CD4-positive, alpha-beta memory T cell (primary cell): ENCODE measurements at regions of chrX and their contacts with region 1.

Region 1: DNA sequence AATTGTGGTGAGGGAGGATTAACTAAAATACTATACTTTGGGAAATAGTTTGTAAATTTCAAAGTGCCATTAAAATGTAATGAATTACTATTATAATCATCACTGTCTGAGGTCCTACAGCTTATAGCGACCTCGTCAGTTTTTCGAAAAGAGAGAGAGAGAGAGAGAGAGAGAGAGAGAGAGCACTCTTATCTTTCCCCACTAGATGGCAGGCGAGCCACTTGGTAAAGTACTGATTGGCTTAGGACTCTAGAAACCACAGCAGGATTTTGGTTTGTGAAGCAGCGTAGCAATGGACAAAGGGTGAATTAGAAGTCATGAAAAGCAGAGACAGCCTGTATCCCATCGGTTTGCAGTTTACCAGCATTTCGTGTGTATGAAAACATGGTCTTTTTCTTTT is 52.5 kb downstream of the LINC00632 start:
- DNase-seq: peak; percentile 17 to 47 (median 41)
- H3K4me3 ChIP-seq: no peak overlapping the region
- H3K4me3 Mint-ChIP-seq: peak overlapping the region in 1 of 8 donors; percentile 13
- H3K27ac ChIP-seq: no peak overlapping the region
- H3K27ac Mint-ChIP-seq: peak overlapping the region in 2 of 7 donors; percentile 76 to 77
- H3K4me1 ChIP-seq: peaks cover 4% of the 10 kb centered on the region
- H3K4me1 Mint-ChIP-seq: peaks cover 7 to 20% (median 12%) of the 10 kb centered on the region in 4 donors
- H3K27me3 ChIP-seq: no peaks in the 10 kb centered on the region
- H3K27me3 Mint-ChIP-seq: peaks cover 6 to 9% of the 10 kb centered on the region in 2 donors

Region 2: DNA sequence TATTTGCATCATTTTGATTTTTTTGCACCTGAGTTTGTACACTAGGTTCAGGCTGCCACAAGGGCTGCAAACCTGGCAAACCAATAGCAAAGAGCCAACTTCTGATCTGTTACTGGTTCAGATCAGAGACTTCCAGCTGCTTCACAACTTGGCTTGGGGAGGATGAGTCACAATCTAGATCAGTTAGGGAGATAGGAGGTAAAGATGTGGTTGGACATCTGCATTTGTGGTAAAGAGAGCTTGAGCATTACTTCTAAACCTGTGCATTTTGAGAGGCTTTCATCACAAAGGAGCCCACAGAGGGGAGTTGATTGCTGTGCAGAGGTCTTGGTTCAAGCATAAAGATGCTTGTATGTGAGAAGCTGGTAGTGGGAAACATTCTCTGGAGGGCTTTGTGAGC is 18.0 kb before region 1 on chrX:
- CTCF ChIA-PET with region 1: interaction called, 9 read pairs
- POLR2A ChIA-PET with region 1: no interaction called
- intact Hi-C with region 1: loop called (anchors 2 kb)
- DNase-seq: peak; percentile 21 to 37 (median 36)
- H3K4me3 ChIP-seq: no peak overlapping the region
- H3K4me3 Mint-ChIP-seq: peak overlapping the region in 2 of 8 donors; percentile 2 to 48
- H3K27ac ChIP-seq: no peak overlapping the region
- H3K27ac Mint-ChIP-seq: peak overlapping the region in 2 of 7 donors; percentile 8 to 14
- H3K4me1 ChIP-seq: peaks cover 4% of the 10 kb centered on the region
- H3K4me1 Mint-ChIP-seq: peaks cover 8 to 11% (median 9%) of the 10 kb centered on the region in 4 donors
- H3K27me3 ChIP-seq: no peaks in the 10 kb centered on the region
- H3K27me3 Mint-ChIP-seq: no peaks in the 10 kb centered on the region

Region 3: GRCh38 chrX:140836874-140837273 is 74.8 kb after region 1 on chrX:
- CTCF ChIA-PET with region 1: no interaction called
- POLR2A ChIA-PET with region 1: no interaction called
- intact Hi-C with region 1: no loop called
- DNase-seq: no peak
- H3K4me3 ChIP-seq: no peak overlapping the region
- H3K4me3 Mint-ChIP-seq: no peak overlapping the region
- H3K27ac ChIP-seq: no peak overlapping the region
- H3K27ac Mint-ChIP-seq: no peak overlapping the region
- H3K4me1 ChIP-seq: no peaks in the 10 kb centered on the region
- H3K4me1 Mint-ChIP-seq: peaks cover 0 to 1% (median 0%) of the 10 kb centered on the region in 4 donors
- H3K27me3 ChIP-seq: no peaks in the 10 kb centered on the region
- H3K27me3 Mint-ChIP-seq: no peaks in the 10 kb centered on the region

Region 4: DNA sequence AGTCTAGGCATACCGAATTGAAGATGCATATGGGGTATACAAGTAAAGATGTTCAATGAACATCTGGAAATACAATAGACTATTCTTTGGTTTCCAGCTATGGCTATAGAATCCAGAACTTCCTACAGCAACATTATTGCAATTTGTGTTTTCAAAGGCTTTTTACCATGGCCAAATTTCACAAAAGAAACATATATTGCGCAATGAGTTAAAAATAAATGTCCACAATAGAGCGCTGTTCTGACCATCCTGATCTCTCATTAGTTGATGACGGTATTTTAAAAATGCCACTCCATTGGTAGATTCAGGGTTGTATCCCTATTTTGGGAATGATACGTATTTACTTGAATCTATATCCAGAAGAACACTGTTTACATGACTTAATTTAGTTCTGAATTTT is 86.7 kb after region 1 on chrX:
- CTCF ChIA-PET with region 1: no interaction called
- POLR2A ChIA-PET with region 1: no interaction called
- intact Hi-C with region 1: no loop called
- DNase-seq: no peak
- H3K4me3 ChIP-seq: no peak overlapping the region
- H3K4me3 Mint-ChIP-seq: no peak overlapping the region
- H3K27ac ChIP-seq: no peak overlapping the region
- H3K27ac Mint-ChIP-seq: no peak overlapping the region
- H3K4me1 ChIP-seq: no peaks in the 10 kb centered on the region
- H3K4me1 Mint-ChIP-seq: no peaks in the 10 kb centered on the region
- H3K27me3 ChIP-seq: no peaks in the 10 kb centered on the region
- H3K27me3 Mint-ChIP-seq: peaks cover 0 to 1% of the 10 kb centered on the region in 2 donors

Region 5: GRCh38 chrX:140918407-140919038 is 156.5 kb after region 1 on chrX:
- CTCF ChIA-PET with region 1: no interaction called
- POLR2A ChIA-PET with region 1: no interaction called
- intact Hi-C with region 1: loop called (anchors 10 kb)
- DNase-seq: peak; percentile 64 to 78 (median 72)
- H3K4me3 ChIP-seq: no peak overlapping the region
- H3K4me3 Mint-ChIP-seq: peak overlapping the region in 6 of 8 donors; percentile 1 to 51 (median 24)
- H3K27ac ChIP-seq: no peak overlapping the region
- H3K27ac Mint-ChIP-seq: peak overlapping the region; percentile 32 to 92 (median 84)
- H3K4me1 ChIP-seq: peaks cover 10% of the 10 kb centered on the region
- H3K4me1 Mint-ChIP-seq: peaks cover 10 to 30% (median 17%) of the 10 kb centered on the region in 4 donors
- H3K27me3 ChIP-seq: no peaks in the 10 kb centered on the region
- H3K27me3 Mint-ChIP-seq: no peaks in the 10 kb centered on the region

Region 6: DNA sequence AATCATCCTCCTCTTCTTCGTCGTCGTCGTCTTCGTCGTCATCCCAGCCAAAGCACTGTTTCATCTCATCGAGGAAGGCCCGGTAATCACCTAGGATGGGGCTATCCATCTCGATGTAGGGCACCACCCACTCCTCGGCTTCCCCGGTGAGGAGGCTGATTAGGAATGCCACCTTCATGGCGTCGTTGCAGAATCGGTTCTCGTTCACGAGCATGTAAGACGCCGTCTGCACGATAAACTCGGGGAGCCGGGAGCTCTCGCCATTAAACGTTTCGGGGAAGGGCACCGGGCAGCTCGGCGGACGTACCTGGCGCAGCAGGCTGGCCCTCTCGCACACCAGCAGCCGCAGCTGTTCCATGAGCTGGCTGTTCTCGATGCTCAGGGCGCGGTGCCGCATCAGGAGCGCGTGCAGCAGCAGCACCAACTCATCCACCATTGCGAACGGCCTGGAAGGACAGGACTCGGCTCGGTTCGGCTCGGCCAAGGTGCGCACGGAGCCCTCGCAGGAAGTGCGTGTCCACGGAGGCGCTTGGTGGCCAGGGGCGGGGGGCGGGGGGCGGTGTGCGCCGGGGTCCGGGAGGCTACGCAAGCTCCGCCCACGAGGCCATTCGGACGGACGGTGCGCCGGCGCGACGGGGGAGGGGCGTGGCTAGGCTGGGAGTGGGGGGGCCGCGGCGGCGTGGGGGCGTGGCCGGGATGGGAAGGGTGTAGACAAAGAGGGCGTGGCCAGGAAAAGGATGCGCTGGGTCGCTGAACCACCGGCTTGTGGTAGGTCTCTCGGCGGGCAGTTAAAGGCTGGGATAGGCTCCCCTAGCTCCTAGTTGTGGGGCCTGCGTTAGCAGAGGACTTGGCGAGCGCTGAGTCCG is 414.8 kb after region 1 on chrX and contains the start of gene LDOC1:
- CTCF ChIA-PET with region 1: no interaction called
- POLR2A ChIA-PET with region 1: no interaction called
- intact Hi-C with region 1: loop called (anchors 5 kb)
- DNase-seq: peak; percentile 63 to 75 (median 70)
- H3K4me3 ChIP-seq: peak within 1 kb of the TSS; percentile 17 to 38
- H3K4me3 Mint-ChIP-seq: peak within 1 kb of the TSS; percentile 81 to 89 (median 86)
- H3K27ac ChIP-seq: peak within 1 kb of the TSS; percentile 13
- H3K27ac Mint-ChIP-seq: peak within 1 kb of the TSS; percentile 53 to 84 (median 70)
- H3K4me1 ChIP-seq: peaks cover 10% of the 10 kb centered on the region
- H3K4me1 Mint-ChIP-seq: peaks cover 6 to 20% (median 16%) of the 10 kb centered on the region in 4 donors
- H3K27me3 ChIP-seq: no peaks in the 10 kb centered on the region
- H3K27me3 Mint-ChIP-seq: no peaks in the 10 kb centered on the region
- total RNA-seq, gene LDOC1: 18.4 to 20.3 TPM